ENCODE measurements at regions of chr2 and their contacts with region 1.

Region 1: DNA sequence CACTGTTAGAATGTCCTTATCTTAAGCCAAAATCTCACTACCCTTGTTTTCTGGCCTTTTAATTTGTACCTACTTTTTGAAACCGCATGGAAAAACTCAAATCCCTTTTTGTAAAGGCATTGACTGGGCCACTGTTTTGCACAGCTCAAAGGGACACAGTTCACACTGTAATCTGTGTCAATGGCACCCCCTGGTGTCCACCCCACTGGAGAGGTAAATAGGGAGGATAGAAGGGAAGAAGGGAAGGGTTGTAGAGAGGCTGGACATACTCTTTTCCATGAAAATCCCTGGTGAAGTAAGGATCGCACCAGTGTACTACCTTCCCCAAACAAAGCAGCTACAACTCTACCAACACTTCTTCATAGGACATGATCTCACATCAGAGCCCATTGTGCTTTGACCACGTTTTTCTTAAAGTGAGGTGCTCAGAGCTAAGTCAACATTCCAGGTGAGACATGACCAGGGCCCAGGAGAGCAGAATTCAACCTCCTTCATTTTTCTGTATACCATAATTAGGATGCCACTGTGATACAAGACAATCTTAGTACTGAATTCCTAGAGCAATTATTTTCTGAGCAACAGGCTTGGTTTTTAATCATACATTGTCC is 92.4 kb upstream of the RMDN2 start:
- H3K4me3 Mint-ChIP-seq: no peak overlapping the region
- H3K27ac Mint-ChIP-seq: no peak overlapping the region
- H3K4me1 Mint-ChIP-seq: peaks cover 66% of the 10 kb centered on the region
- H3K27me3 Mint-ChIP-seq: no peaks in the 10 kb centered on the region

Region 2: DNA sequence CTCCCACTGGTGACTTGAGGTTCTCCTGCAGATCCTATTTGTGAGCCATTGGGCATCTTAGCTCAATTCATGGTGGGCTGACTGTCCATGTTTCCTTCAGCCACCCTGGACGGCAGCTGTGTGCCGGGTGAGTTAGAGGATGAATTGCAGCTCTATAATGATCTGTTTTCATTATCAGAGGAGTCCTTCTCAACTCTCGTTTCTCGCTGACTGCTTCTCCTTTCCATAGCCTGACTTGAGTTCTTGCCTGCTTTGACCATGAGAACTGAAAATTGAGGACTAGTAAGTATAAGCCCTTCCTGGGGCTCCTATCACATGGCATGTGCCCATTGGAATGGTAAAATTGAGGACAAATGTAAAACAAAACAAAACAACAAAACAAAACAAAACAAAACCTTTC is 283.1 kb before region 1 on chr2:
- intact Hi-C with region 1: loop called (anchors 10 kb)
- H3K4me3 Mint-ChIP-seq: no peak overlapping the region
- H3K27ac Mint-ChIP-seq: peak overlapping the region; percentile 64
- H3K4me1 Mint-ChIP-seq: peaks cover 30% of the 10 kb centered on the region
- H3K27me3 Mint-ChIP-seq: no peaks in the 10 kb centered on the region

Region 3: GRCh38 chr2:37672104-37672869 is 160.4 kb before region 1 on chr2:
- intact Hi-C with region 1: loop called (anchors 10 kb)
- H3K4me3 Mint-ChIP-seq: peak overlapping the region; percentile 91
- H3K27ac Mint-ChIP-seq: peak overlapping the region; percentile 89
- H3K4me1 Mint-ChIP-seq: peaks cover 39% of the 10 kb centered on the region
- H3K27me3 Mint-ChIP-seq: no peaks in the 10 kb centered on the region

Region 4: DNA sequence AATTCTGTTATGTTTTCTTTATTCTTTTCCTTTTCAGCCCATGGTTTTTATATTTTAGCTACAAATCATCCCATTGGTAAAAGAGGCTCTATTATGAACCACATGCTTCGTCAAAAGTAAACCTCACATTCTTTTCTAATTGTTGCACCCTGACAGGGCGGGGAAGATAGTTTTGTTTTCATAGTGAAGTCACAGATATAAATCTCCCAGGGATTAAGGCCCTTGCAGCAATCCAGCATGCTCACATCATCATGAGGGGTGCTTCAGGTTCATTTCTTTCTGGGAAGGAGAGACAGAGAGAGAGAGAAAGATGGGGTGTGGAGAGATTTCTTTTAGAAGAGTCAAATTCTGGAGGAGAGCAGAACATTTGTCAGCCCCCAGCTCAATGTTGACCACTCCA is 36.8 kb before region 1 on chr2:
- intact Hi-C with region 1: no loop called
- H3K4me3 Mint-ChIP-seq: no peak overlapping the region
- H3K27ac Mint-ChIP-seq: no peak overlapping the region
- H3K4me1 Mint-ChIP-seq: peaks cover 34% of the 10 kb centered on the region
- H3K27me3 Mint-ChIP-seq: no peaks in the 10 kb centered on the region

Region 5: GRCh38 chr2:37858197-37858711 is 25.6 kb after region 1 on chr2:
- intact Hi-C with region 1: no loop called
- H3K4me3 Mint-ChIP-seq: no peak overlapping the region
- H3K27ac Mint-ChIP-seq: no peak overlapping the region
- H3K4me1 Mint-ChIP-seq: peaks cover 33% of the 10 kb centered on the region
- H3K27me3 Mint-ChIP-seq: peaks cover 56% of the 10 kb centered on the region

Region 6: DNA sequence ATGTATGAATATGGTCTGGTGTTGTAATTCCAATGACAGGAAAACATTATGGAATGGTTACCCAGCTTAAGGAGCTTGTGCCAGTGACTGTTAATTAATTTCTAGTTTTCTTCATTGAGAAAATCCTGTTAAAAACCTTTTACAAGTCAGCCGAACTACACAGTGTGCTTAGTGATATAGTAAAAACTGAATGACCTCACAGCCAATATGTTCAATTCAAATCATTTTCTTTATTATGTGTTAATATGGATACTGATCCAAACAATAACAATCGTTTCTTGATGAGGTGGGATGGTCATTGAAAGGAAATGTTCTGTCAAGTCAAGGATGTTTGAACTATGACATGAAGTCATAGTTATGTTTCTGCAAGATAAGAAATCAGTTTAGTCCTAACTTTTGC is 50.8 kb after region 1 on chr2:
- intact Hi-C with region 1: no loop called
- H3K4me3 Mint-ChIP-seq: no peak overlapping the region
- H3K27ac Mint-ChIP-seq: no peak overlapping the region
- H3K4me1 Mint-ChIP-seq: peaks cover 5% of the 10 kb centered on the region
- H3K27me3 Mint-ChIP-seq: peaks cover 28% of the 10 kb centered on the region